Activated CD4-positive, alpha-beta T cell treated with anti-CD3 and anti-CD28 coated beads, Interleukin-2, amount 10 ng/mL, durations not matched to agents 24 days and 14 days (primary cell): ENCODE measurements at regions of chr7 and their contacts with region 1.

Region 1: GRCh38 chr7:20786779-20787659 is at the start of gene SP8:
- DNase-seq: peak; percentile 70
- H3K4me3 Mint-ChIP-seq: peak within 1 kb of the TSS; percentile 66
- H3K27ac Mint-ChIP-seq: peak within 1 kb of the TSS; percentile 83
- H3K4me1 Mint-ChIP-seq: peaks cover 22% of the 10 kb centered on the region
- H3K27me3 Mint-ChIP-seq: peaks cover 75% of the 10 kb centered on the region
- total RNA-seq, gene SP8: not detected in 2 replicates

Region 2: DNA sequence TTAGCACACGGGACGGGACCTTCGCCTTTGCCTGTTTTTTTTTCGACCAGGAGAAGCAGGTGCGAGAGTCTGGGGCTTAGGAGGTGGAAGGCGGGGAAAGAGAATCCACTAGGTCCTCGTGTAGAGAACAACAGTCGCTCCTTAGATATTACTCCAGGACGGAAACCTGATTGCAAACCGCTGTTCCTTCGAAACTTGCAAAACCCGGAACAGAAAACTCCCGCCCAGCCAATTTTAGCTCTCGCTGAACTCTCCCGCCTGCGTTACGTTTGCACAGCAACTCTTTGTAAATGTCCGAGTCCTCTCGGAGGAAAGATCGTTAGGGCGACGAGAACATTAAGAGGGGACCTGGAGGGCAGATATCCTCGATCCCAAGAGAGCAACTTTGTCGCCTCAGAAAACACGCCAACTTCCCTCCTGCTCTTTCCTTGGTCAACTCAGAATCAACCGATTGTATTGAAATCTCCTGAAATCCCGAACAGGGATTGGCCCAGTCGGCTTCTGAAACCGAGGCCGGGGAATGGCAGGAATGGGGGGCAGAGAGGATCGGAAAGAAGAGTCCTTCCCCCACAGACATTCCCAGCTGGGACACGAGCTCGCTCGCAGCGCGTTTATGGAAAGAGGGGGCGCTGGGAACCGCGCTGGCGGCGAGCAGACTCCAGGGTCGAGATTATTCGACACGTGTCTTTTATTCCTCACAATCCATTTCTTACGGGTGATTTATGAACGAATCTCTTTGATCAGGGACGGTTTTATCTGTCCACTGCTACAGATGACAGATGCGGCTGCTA is 1679.5 kb before region 1 on chr7:
- intact Hi-C with region 1: loop called (anchors 5 kb)
- DNase-seq: peak; percentile 60
- H3K4me3 Mint-ChIP-seq: no peak overlapping the region
- H3K27ac Mint-ChIP-seq: no peak overlapping the region
- H3K4me1 Mint-ChIP-seq: no peaks in the 10 kb centered on the region
- H3K27me3 Mint-ChIP-seq: peaks cover 71% of the 10 kb centered on the region

Region 3: GRCh38 chr7:20797351-20798080 is 10.5 kb after region 1 on chr7:
- intact Hi-C with region 1: loop called (anchors 1 kb)
- DNase-seq: peak; percentile 62
- H3K4me3 Mint-ChIP-seq: peak overlapping the region; percentile 89
- H3K27ac Mint-ChIP-seq: peak overlapping the region; percentile 52
- H3K4me1 Mint-ChIP-seq: peaks cover 11% of the 10 kb centered on the region
- H3K27me3 Mint-ChIP-seq: peaks cover 58% of the 10 kb centered on the region

Region 4: GRCh38 chr7:20849401-20849800 is 62.4 kb after region 1 on chr7:
- intact Hi-C with region 1: no loop called
- DNase-seq: peak; percentile 31
- H3K4me3 Mint-ChIP-seq: no peak overlapping the region
- H3K27ac Mint-ChIP-seq: no peak overlapping the region
- H3K4me1 Mint-ChIP-seq: no peaks in the 10 kb centered on the region
- H3K27me3 Mint-ChIP-seq: no peaks in the 10 kb centered on the region